HepG2 (cell line): ENCODE measurements at regions of chr10 and their contacts with region 1.

Region 1: GRCh38 chr10:112314822-112315474 is 31.7 kb downstream of the TECTB start:
- DNase-seq: peak; percentile 64
- ATAC-seq: peak; percentile 95
- H3K4me3 ChIP-seq: no peak overlapping the region
- H3K27ac ChIP-seq: no peak overlapping the region
- H3K4me1 ChIP-seq: peaks cover 47% of the 10 kb centered on the region
- H3K27me3 ChIP-seq: no peaks in the 10 kb centered on the region
- CTCF ChIP-seq: peak; percentile 92
- EP300 ChIP-seq: no peak
- POLR2A ChIP-seq: no peak
- RAD21 ChIP-seq: peak; percentile 94

Region 2: GRCh38 chr10:111360260-111360925 is 954.6 kb before region 1 on chr10:
- CTCF ChIA-PET with region 1: no interaction called
- POLR2A ChIA-PET with region 1: no interaction called
- in situ Hi-C with region 1: no loop called
- intact Hi-C with region 1: loop called (anchors 5 kb)
- DNase-seq: peak; percentile 69
- ATAC-seq: peak; percentile 100
- H3K4me3 ChIP-seq: no peak overlapping the region
- H3K27ac ChIP-seq: no peak overlapping the region
- H3K4me1 ChIP-seq: no peaks in the 10 kb centered on the region
- H3K27me3 ChIP-seq: peaks cover 0 to 6% of the 10 kb centered on the region in 2 experiments; a peak in 1 of 5 replicates
- CTCF ChIP-seq: peak; percentile 78
- EP300 ChIP-seq: no peak
- POLR2A ChIP-seq: no peak
- RAD21 ChIP-seq: peak; percentile 77

Region 3: DNA sequence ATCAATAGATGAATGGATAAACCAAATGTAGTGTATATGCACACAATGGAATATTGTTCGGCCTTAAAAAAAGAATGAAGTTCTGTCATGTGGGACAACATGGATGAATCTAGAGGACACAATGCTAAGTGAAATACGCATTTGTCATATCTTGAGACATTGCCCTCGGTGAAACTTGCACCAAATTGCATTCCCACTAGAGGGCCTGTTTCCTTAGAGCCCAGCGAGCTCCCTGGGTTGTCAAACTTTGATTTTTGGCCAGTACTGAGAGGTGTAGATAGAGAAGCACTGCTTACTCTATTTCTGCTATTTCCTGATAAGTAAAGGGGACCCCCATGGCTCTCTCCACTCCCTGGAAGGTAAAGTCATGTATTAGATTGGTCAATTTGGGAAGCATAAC is 288.5 kb before region 1 on chr10:
- CTCF ChIA-PET with region 1: no interaction called
- POLR2A ChIA-PET with region 1: no interaction called
- in situ Hi-C with region 1: no loop called
- intact Hi-C with region 1: loop called (anchors 10 kb)
- DNase-seq: no peak
- ATAC-seq: no peak
- H3K4me3 ChIP-seq: no peak overlapping the region
- H3K27ac ChIP-seq: no peak overlapping the region
- H3K4me1 ChIP-seq: no peaks in the 10 kb centered on the region
- H3K27me3 ChIP-seq: no peaks in the 10 kb centered on the region; a peak in 1 of 5 replicates
- CTCF ChIP-seq: 0 out of 2 replicates have a peak, but pooled peaks have one; percentile 14
- EP300 ChIP-seq: no peak
- POLR2A ChIP-seq: no peak
- RAD21 ChIP-seq: no peak

Region 4: DNA sequence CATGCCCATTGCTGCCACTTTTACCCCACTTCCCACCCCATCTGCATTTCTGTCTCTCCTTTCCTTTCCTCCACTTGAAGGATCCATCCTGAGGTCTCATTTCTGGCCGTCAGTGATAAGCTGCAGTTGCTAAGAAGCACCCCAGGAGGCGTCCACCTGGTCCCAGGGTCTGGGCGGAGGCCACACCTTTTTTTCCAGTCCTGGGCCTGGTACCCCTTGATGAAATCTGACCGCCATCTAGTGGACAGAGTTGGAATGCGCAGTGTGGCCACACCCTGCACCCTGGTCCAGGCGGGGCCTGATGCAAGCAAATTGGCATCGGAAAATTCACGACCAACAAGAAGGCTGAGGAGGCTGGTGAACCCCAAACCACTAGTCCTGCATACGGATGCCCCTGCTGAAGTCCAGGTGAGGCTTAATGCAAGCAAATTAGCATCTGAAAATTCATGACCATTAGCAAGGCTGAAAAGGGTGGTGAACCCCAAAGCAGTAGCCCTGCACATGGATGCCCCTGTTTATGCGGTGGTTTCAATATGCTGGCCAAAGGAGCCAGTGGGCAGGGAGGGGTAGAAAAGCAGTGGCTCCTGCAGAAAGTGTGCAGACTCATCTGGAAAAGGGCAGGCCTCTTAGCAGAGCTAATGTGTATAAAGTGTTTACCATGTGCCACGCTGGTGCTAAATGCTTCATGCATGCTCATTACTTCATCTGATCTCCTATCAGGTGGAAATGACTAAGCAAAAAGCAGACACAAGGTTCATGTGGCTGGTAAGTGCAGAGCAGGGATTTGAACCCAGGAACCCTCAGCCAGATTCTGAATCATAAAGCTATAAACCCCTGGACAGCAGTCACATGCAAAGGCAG is 174.6 kb before region 1 on chr10:
- CTCF ChIA-PET with region 1: interaction called, 14 read pairs
- POLR2A ChIA-PET with region 1: no interaction called
- in situ Hi-C with region 1: loop called (anchors 5 kb)
- intact Hi-C with region 1: loop called (anchors 1 kb)
- DNase-seq: peak; percentile 78
- ATAC-seq: peak; percentile 80
- H3K4me3 ChIP-seq: no peak overlapping the region
- H3K27ac ChIP-seq: no peak overlapping the region
- H3K4me1 ChIP-seq: no peaks in the 10 kb centered on the region
- H3K27me3 ChIP-seq: no peaks in the 10 kb centered on the region
- CTCF ChIP-seq: peak; percentile 86
- EP300 ChIP-seq: no peak
- POLR2A ChIP-seq: no peak
- RAD21 ChIP-seq: peak; percentile 76

Region 5: GRCh38 chr10:112434988-112435619 is 120.2 kb after region 1 on chr10:
- CTCF ChIA-PET with region 1: interaction called, 7 read pairs
- POLR2A ChIA-PET with region 1: no interaction called
- in situ Hi-C with region 1: no loop called
- intact Hi-C with region 1: loop called (anchors 2 kb)
- DNase-seq: peak; percentile 52
- ATAC-seq: no peak
- H3K4me3 ChIP-seq: no peak overlapping the region
- H3K27ac ChIP-seq: no peak overlapping the region
- H3K4me1 ChIP-seq: peaks cover 2% of the 10 kb centered on the region
- H3K27me3 ChIP-seq: no peaks in the 10 kb centered on the region
- CTCF ChIP-seq: peak; percentile 59
- EP300 ChIP-seq: no peak
- POLR2A ChIP-seq: no peak
- RAD21 ChIP-seq: peak; percentile 44; the same call in 1 of the 2 replicates